ENCODE measurements at regions of chr19 and their contacts with region 1.

Region 1: GRCh38 chr19:12656899-12657571 is 9.5 kb downstream of the MAN2B1 start:
- DNase-seq: peak; percentile 98
- ATAC-seq: peak; percentile 98
- H3K4me3 Mint-ChIP-seq: peak overlapping the region; percentile 56
- H3K27ac Mint-ChIP-seq: peak overlapping the region; percentile 86
- H3K4me1 Mint-ChIP-seq: peaks cover 6% of the 10 kb centered on the region
- H3K27me3 Mint-ChIP-seq: no peaks in the 10 kb centered on the region
- CTCF ChIP-seq: peak; percentile 18; the same call in 1 of the 2 replicates

Region 2: GRCh38 chr19:12610540-12611360 is 46.3 kb before region 1 on chr19 and contains the starts of genes ZNF490 and ZNF791:
- CTCF ChIA-PET with region 1: interaction called, 12 read pairs
- POLR2A ChIA-PET with region 1: interaction called, 4 read pairs
- DNase-seq: peak; percentile 97
- ATAC-seq: peak; percentile 97
- H3K4me3 Mint-ChIP-seq: peak within 1 kb of the TSS; percentile 97
- H3K27ac Mint-ChIP-seq: peak within 1 kb of the TSS; percentile 99
- H3K4me1 Mint-ChIP-seq: peaks cover 3% of the 10 kb centered on the region
- H3K27me3 Mint-ChIP-seq: no peaks in the 10 kb centered on the region
- CTCF ChIP-seq: no peak
- total RNA-seq, gene ZNF490: 7.3 to 7.7 TPM (median 7.6 TPM) in 3 replicates
- total RNA-seq, gene ZNF791: 21.4 to 25.9 TPM (median 23.9 TPM) in 3 replicates

Region 3: DNA sequence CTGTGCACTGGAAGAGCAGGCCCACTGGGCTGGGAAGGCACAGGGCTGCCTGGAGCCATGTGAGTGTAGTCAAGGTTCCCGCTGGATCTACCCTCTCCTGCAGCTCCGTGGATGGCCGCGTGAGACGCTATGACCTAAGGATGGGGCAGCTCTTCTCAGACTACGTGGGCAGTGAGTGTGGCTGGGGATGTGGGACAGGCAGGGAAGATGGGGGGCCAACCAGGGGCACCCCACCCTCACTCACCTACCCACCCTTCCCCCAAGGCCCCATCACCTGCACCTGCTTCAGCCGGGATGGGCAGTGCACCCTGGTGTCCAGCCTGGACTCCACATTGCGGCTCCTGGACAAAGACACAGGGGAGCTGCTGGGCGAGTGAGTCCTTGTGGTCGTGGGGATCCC is 15.7 kb after region 1 on chr19:
- CTCF ChIA-PET with region 1: interaction called, 38 read pairs
- POLR2A ChIA-PET with region 1: interaction called, 3 read pairs
- DNase-seq: no peak
- ATAC-seq: no peak
- H3K4me3 Mint-ChIP-seq: no peak overlapping the region
- H3K27ac Mint-ChIP-seq: no peak overlapping the region
- H3K4me1 Mint-ChIP-seq: peaks cover 17% of the 10 kb centered on the region
- H3K27me3 Mint-ChIP-seq: no peaks in the 10 kb centered on the region
- CTCF ChIP-seq: no peak

Region 4: DNA sequence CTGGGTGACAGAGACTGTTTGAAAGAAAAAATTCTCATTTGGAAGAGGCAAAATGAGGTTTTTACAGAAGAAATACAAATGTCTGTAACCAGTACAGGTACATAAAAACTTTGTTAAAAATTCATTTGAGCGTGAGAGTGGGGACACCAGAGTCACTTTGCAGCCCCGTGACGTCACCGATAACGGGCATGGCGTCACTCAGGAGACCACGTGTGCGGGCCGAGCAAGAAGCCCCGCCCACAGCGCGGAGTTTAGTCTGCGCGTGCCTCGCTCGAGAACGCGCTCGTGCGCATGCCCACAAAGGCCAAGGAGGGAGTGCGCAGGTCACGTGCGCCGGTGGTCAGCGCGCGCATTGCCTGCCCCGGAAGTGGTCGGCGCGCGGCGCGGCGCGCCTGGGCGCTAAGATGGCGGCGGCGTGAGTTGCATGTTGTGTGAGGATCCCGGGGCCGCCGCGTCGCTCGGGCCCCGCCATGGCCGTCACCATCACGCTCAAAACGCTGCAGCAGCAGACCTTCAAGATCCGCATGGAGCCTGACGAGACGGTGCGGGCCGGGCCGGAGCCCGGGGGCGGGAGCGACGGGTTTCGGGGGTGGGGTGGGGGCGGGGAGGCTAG is 288.6 kb after region 1 on chr19 and contains the start of gene RAD23A:
- CTCF ChIA-PET with region 1: no interaction called
- POLR2A ChIA-PET with region 1: no interaction called
- DNase-seq: peak; percentile 98
- ATAC-seq: peak; percentile 67
- H3K4me3 Mint-ChIP-seq: peak within 1 kb of the TSS; percentile 90
- H3K27ac Mint-ChIP-seq: peak within 1 kb of the TSS; percentile 98
- H3K4me1 Mint-ChIP-seq: peaks cover 17% of the 10 kb centered on the region
- H3K27me3 Mint-ChIP-seq: no peaks in the 10 kb centered on the region; the same call in 1 of the 2 replicates
- CTCF ChIP-seq: no peak
- total RNA-seq, gene RAD23A: 84.3 to 96.6 TPM (median 96.2 TPM) in 3 replicates

Measured in WTC11 (cell line).